ENCODE measurements at regions of chrX and their contacts with region 1.

Region 1: DNA sequence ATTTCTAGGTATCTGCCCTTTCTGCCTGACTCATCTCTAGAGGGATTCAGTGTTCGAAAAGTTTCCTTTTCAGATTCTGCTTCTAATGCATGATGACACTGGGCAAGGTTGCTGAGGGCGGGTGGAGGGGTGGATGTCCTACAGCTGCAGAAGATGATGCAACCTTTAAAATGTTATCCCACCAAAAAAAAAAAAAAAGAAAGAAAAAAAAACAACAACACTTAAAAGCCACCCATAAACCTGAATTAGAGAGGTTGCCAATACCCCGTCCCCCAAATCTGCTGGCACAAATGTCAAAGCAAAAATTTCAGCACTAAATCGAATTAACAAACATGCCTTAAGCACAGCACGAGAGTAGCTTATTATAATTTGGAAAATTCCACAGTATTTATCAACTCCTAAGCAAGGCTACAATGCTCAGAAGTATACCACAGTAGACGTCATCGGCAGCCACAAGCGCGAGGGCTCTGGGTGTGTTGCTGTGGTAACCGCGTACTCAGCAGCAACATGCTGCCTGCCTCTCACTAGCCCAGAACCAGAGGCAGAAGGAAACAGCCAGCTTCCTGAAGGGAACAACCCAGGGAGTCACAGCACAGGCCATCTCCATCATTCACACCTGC is 167.5 kb upstream of the MAP3K15 start:
- DNase-seq: peak; percentile 87
- H3K4me3 Mint-ChIP-seq: peak overlapping the region; percentile 67
- H3K27ac Mint-ChIP-seq: peak overlapping the region; percentile 91
- H3K4me1 Mint-ChIP-seq: peaks cover 86% of the 10 kb centered on the region
- H3K27me3 Mint-ChIP-seq: no peaks in the 10 kb centered on the region

Region 2: GRCh38 chrX:18674788-18675735 is 1007.8 kb before region 1 on chrX:
- CTCF ChIA-PET with region 1: no interaction called
- POLR2A ChIA-PET with region 1: no interaction called
- intact Hi-C with region 1: loop called (anchors 10 kb)
- DNase-seq: peak; percentile 79
- H3K4me3 Mint-ChIP-seq: peak overlapping the region; percentile 69
- H3K27ac Mint-ChIP-seq: peak overlapping the region; percentile 77
- H3K4me1 Mint-ChIP-seq: no peaks in the 10 kb centered on the region
- H3K27me3 Mint-ChIP-seq: no peaks in the 10 kb centered on the region

Region 3: GRCh38 chrX:19554786-19555185 is 128.0 kb before region 1 on chrX:
- CTCF ChIA-PET with region 1: no interaction called
- POLR2A ChIA-PET with region 1: no interaction called
- intact Hi-C with region 1: no loop called
- DNase-seq: peak; percentile 59
- H3K4me3 Mint-ChIP-seq: no peak overlapping the region
- H3K27ac Mint-ChIP-seq: peak overlapping the region; percentile 73
- H3K4me1 Mint-ChIP-seq: peaks cover 62% of the 10 kb centered on the region
- H3K27me3 Mint-ChIP-seq: no peaks in the 10 kb centered on the region

Region 4: GRCh38 chrX:19566359-19567222 is 116.2 kb before region 1 on chrX:
- CTCF ChIA-PET with region 1: no interaction called
- POLR2A ChIA-PET with region 1: no interaction called
- intact Hi-C with region 1: loop called (anchors 2 kb)
- DNase-seq: peak; percentile 63
- H3K4me3 Mint-ChIP-seq: peak overlapping the region; percentile 24
- H3K27ac Mint-ChIP-seq: peak overlapping the region; percentile 93
- H3K4me1 Mint-ChIP-seq: peaks cover 68% of the 10 kb centered on the region
- H3K27me3 Mint-ChIP-seq: no peaks in the 10 kb centered on the region

Region 5: GRCh38 chrX:19625612-19626011 is 57.2 kb before region 1 on chrX:
- CTCF ChIA-PET with region 1: no interaction called
- POLR2A ChIA-PET with region 1: interaction called, 5 read pairs
- intact Hi-C with region 1: loop called (anchors 1 kb)
- DNase-seq: peak; percentile 80
- H3K4me3 Mint-ChIP-seq: no peak overlapping the region
- H3K27ac Mint-ChIP-seq: peak overlapping the region; percentile 91
- H3K4me1 Mint-ChIP-seq: peaks cover 74% of the 10 kb centered on the region
- H3K27me3 Mint-ChIP-seq: no peaks in the 10 kb centered on the region

Region 6: DNA sequence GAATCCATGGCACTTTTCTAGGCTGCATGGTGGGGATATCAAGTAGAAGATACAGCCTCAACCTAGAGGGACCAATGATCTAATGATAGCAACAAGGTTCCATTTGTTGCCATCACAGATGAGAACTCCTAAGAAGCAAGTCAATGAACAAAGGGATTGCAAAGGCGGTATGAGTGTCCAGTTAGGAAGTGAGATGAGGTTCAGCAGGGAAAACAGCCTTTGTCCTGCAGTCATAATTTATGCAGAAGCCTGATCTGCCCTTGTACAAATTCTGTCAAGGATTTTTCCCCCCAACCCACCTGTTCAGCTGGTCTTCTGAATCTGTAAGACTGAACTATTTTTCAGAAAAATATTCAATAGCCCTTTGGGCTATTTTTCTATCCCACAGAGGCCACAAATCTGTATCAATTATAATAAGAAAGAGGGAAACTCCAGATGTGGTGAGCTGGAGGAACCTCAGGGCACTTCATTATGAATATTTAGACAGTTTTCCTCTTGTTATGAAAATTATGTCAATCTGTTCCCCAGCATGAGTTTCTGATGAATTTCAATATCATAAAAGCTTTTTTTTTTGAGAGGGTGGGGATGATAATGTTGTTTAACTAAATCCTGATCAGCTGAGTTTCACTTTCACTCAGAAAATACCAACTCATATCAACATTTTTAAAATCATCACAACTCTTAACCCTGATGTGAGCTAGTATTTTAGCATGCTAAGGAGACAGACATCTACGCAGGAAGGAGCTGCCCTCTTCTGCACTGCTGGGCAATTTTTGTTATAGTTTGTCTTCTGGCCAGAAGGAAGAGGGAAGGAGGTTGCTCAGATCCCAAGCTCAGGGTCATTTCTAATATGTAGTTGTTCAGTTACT is 40.3 kb before region 1 on chrX:
- CTCF ChIA-PET with region 1: no interaction called
- POLR2A ChIA-PET with region 1: no interaction called
- intact Hi-C with region 1: loop called (anchors 5 kb)
- DNase-seq: no peak
- H3K4me3 Mint-ChIP-seq: no peak overlapping the region
- H3K27ac Mint-ChIP-seq: peak overlapping the region; percentile 40
- H3K4me1 Mint-ChIP-seq: peaks cover 26% of the 10 kb centered on the region
- H3K27me3 Mint-ChIP-seq: no peaks in the 10 kb centered on the region

Region 7: DNA sequence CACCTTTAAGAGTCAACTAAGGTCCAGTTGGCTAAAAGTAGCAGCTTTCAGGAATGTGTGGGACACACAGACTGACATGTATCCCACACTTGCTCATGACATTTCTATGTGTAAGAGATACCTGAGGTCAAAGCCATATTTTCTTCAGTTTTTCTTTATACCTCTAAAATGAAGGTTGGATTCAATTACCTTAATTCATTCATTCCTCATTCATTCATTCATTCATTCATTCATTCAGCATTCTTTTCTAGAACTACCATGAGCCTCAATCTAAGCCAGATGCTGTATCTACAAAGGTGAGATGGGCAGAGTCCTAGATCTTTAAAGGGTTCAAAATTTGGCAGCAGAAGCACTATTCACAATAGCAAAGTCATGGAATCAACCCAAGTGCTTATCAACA is 27.8 kb before region 1 on chrX:
- CTCF ChIA-PET with region 1: no interaction called
- POLR2A ChIA-PET with region 1: no interaction called
- intact Hi-C with region 1: no loop called
- DNase-seq: no peak
- H3K4me3 Mint-ChIP-seq: no peak overlapping the region
- H3K27ac Mint-ChIP-seq: no peak overlapping the region
- H3K4me1 Mint-ChIP-seq: peaks cover 52% of the 10 kb centered on the region
- H3K27me3 Mint-ChIP-seq: no peaks in the 10 kb centered on the region

Region 8: GRCh38 chrX:19721726-19722370 is 39.0 kb after region 1 on chrX:
- CTCF ChIA-PET with region 1: no interaction called
- POLR2A ChIA-PET with region 1: no interaction called
- intact Hi-C with region 1: loop called (anchors 5 kb)
- DNase-seq: no peak
- H3K4me3 Mint-ChIP-seq: no peak overlapping the region
- H3K27ac Mint-ChIP-seq: no peak overlapping the region
- H3K4me1 Mint-ChIP-seq: peaks cover 59% of the 10 kb centered on the region
- H3K27me3 Mint-ChIP-seq: no peaks in the 10 kb centered on the region

Region 9: GRCh38 chrX:19747652-19748610 is 65.1 kb after region 1 on chrX:
- CTCF ChIA-PET with region 1: no interaction called
- POLR2A ChIA-PET with region 1: no interaction called
- intact Hi-C with region 1: loop called (anchors 1 kb)
- DNase-seq: peak; percentile 85
- H3K4me3 Mint-ChIP-seq: peak overlapping the region; percentile 64
- H3K27ac Mint-ChIP-seq: peak overlapping the region; percentile 97
- H3K4me1 Mint-ChIP-seq: peaks cover 91% of the 10 kb centered on the region
- H3K27me3 Mint-ChIP-seq: no peaks in the 10 kb centered on the region

Measured in activated CD4-positive, alpha-beta memory T cell treated with anti-CD3 and anti-CD28 coated beads for 36 hours (primary cell).